ENCODE measurements at regions of chr15 and their contacts with region 1.

Region 1: DNA sequence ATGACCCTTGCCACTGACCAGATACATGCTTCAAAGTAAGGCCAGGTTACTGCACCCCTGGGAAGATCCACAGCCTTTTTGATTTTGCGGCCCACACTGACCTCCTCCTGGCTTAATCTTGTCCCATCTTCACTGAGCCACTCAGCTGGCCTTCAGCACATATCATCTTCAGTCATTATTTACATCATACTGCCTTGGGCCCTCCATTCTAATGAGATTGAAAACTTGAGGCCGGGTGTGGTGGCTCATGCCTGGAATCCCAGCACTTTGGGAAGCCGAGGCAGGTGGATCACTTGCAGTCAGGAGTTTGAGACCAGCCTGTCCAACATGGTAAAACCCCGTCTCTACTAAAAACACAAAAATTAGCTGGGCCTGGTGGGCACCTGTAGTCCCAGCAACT is 58.3 kb downstream of the TMEM266 start:
- DNase-seq: no peak
- ATAC-seq: no peak
- H3K4me3 ChIP-seq: no peak overlapping the region
- H3K27ac ChIP-seq: no peak overlapping the region
- H3K4me1 ChIP-seq: peaks cover 7 to 17% (median 10%) of the 10 kb centered on the region in 3 donors
- H3K27me3 ChIP-seq: no peaks in the 10 kb centered on the region
- CTCF ChIP-seq: no peak

Region 2: GRCh38 chr15:75872403-75872990 is 245.6 kb before region 1 on chr15:
- intact Hi-C with region 1: no loop called
- DNase-seq: no peak
- ATAC-seq: no peak
- H3K4me3 ChIP-seq: no peak overlapping the region
- H3K27ac ChIP-seq: no peak overlapping the region
- H3K4me1 ChIP-seq: no peaks in the 10 kb centered on the region
- H3K27me3 ChIP-seq: no peaks in the 10 kb centered on the region
- CTCF ChIP-seq: no peak

Region 3: GRCh38 chr15:76012021-76012551 is 106.0 kb before region 1 on chr15 and contains the start of gene NRG4:
- intact Hi-C with region 1: no loop called
- DNase-seq: peak in 5 of 6 donors; percentile 41 to 60 (median 50)
- ATAC-seq: peak; percentile 84 to 93 (median 90)
- H3K4me3 ChIP-seq: peak within 1 kb of the TSS in 3 of 4 donors; percentile 20 to 37 (median 36)
- H3K27ac ChIP-seq: peak within 1 kb of the TSS; percentile 28 to 79 (median 68)
- H3K4me1 ChIP-seq: peaks cover 0 to 17% (median 7%) of the 10 kb centered on the region in 3 donors
- H3K27me3 ChIP-seq: no peaks in the 10 kb centered on the region
- CTCF ChIP-seq: no peak
- total RNA-seq, gene NRG4: 20.4 to 50.1 (median 36.0) TPM

Region 4: DNA sequence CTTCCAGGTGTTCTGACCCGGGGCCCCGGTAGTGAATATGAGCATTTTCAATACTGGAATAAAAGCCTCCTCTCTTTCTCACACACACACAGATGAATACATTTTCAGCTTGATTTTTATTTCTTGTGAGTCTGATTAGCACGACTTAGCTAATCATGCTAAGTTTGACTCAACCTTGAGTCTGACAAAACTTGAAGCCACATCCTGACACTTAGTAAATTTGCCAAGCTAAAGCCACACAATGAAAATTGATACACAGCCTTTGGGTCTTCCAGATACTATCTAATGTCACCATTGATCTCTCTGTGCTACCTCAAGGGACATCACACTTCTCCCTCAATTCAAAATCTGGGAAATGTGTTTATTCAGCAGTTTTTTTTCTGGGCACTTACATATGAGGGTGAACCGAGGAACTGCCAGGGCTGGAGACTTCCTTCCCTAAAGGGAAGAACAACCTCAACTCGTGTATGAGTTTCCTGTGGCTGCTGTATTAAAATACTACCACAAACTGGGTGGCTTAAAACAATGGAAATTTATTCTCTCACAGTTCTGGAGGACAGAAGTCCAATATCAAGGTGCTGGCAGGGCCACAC is 39.7 kb before region 1 on chr15:
- intact Hi-C with region 1: loop called in 1 of 3 experiments (anchors 2 kb)
- DNase-seq: no peak
- ATAC-seq: peak in 1 of 4 donors; percentile 56
- H3K4me3 ChIP-seq: no peak overlapping the region
- H3K27ac ChIP-seq: no peak overlapping the region
- H3K4me1 ChIP-seq: no peaks in the 10 kb centered on the region
- H3K27me3 ChIP-seq: no peaks in the 10 kb centered on the region
- CTCF ChIP-seq: no peak

Region 5: DNA sequence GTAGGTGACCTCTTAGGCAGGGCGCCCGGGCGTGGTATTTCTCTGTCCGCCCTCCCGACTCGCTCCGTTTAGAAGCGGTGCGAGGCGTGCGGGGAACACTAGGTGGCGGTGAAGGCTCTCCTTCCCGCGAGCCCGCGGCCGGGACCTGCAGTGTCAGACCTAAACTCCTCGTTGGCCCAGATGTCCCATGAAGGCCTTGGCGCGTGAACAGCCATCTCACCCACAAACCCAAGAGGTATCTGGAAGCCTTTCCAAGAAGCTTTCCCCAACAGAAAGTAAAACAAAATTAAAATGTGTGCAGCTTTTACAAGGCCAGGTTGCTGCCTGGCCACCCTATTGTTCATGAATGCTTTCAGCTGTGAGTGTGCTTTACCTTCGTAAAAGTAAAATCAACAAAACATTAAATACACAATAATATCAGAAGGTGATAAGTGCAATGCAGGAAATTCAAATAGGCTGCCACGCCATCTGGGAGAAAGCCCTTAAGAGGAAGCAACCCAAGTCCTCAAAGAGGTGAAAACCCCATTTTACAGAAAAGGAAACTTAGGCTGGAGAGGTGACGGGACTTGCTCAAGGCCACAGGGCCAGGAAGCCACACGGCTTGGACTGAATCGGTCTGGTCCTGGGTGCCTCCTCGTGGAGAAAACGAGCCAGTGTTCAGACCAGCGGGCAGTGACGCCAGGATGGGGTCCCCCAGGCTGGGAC is 72.9 kb after region 1 on chr15:
- intact Hi-C with region 1: no loop called
- DNase-seq: peak; percentile 66 to 92 (median 84)
- ATAC-seq: peak; percentile 92 to 97 (median 96)
- H3K4me3 ChIP-seq: peak overlapping the region in 1 of 4 donors; percentile 25
- H3K27ac ChIP-seq: peak overlapping the region in 2 of 4 donors; percentile 39 to 41
- H3K4me1 ChIP-seq: peaks cover 0 to under 1% (median 0%) of the 10 kb centered on the region in 3 donors
- H3K27me3 ChIP-seq: no peaks in the 10 kb centered on the region
- CTCF ChIP-seq: peak; percentile 64 to 88 (median 76)